Activated naive CD4-positive, alpha-beta T cell treated with anti-CD3 and anti-CD28 coated beads for 36 hours (primary cell): ENCODE measurements at regions of chr17 and their contacts with region 1.

Region 1: GRCh38 chr17:75515496-75516254 is at the start of gene CASKIN2:
- DNase-seq: peak; percentile 90
- H3K4me3 Mint-ChIP-seq: peak within 1 kb of the TSS; percentile 62
- H3K27ac Mint-ChIP-seq: no peak within 1 kb of the TSS
- H3K4me1 Mint-ChIP-seq: peaks cover 23% of the 10 kb centered on the region
- H3K27me3 Mint-ChIP-seq: no peaks in the 10 kb centered on the region
- total RNA-seq, gene CASKIN2: 1.0 to 1.1 TPM

Region 2: GRCh38 chr17:75261336-75262111 is 254.2 kb before region 1 on chr17 and contains the starts of genes GGA3 and MRPS7:
- CTCF ChIA-PET with region 1: interaction called, 3 read pairs
- intact Hi-C with region 1: loop called (anchors 10 kb)
- DNase-seq: peak; percentile 98
- H3K4me3 Mint-ChIP-seq: peak within 1 kb of the TSS; percentile 93
- H3K27ac Mint-ChIP-seq: peak within 1 kb of the TSS; percentile 99
- H3K4me1 Mint-ChIP-seq: peaks cover 53% of the 10 kb centered on the region
- H3K27me3 Mint-ChIP-seq: no peaks in the 10 kb centered on the region
- total RNA-seq, gene GGA3: 65.7 to 66.1 TPM
- total RNA-seq, gene MRPS7: 73.3 to 78.3 TPM

Region 3: GRCh38 chr17:75430159-75430974 is 85.3 kb before region 1 on chr17:
- CTCF ChIA-PET with region 1: interaction called, 4 read pairs
- intact Hi-C with region 1: loop called (anchors 1 kb)
- DNase-seq: no peak
- H3K4me3 Mint-ChIP-seq: no peak overlapping the region
- H3K27ac Mint-ChIP-seq: no peak overlapping the region
- H3K4me1 Mint-ChIP-seq: peaks cover 8% of the 10 kb centered on the region
- H3K27me3 Mint-ChIP-seq: peaks cover 2% of the 10 kb centered on the region

Region 4: DNA sequence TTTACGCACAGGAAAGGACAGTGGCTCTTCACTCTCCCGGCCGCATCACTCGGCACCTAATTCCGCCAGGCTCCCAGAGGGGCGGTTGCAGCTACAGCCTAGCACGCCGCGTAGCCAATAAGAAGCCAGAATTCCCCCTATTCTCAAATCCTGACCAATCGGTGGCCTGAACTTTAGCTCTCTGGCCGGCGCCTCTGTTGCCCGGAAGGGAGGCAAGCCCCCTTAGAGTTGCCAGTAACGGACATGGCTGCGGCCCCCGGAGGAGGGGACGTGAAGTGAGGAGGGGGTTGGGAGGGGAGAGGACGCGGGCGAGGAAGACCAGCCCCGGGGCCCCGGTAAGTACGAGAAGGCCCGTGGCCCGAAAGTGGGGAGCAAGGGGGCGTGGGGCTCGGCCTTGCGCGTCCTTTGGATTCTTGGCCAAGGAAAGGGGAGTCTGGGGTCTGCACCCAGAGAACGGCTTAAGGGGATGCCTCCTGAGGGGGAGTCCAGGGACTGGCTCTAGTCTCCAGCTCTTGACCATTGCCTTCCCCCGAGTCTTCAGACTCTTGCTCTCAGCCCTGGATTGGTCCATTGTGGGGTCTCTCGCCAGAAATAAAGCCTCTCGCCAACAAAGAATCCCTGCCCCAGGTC is 59.1 kb before region 1 on chr17 and contains the start of gene TMEM94:
- CTCF ChIA-PET with region 1: interaction called, 3 read pairs
- intact Hi-C with region 1: loop called (anchors 1 kb)
- DNase-seq: peak; percentile 96
- H3K4me3 Mint-ChIP-seq: peak within 1 kb of the TSS; percentile 83
- H3K27ac Mint-ChIP-seq: peak within 1 kb of the TSS; percentile 85
- H3K4me1 Mint-ChIP-seq: peaks cover 15% of the 10 kb centered on the region
- H3K27me3 Mint-ChIP-seq: no peaks in the 10 kb centered on the region
- total RNA-seq, gene TMEM94: 50.4 to 53.5 TPM

Region 5: GRCh38 chr17:75667021-75667790 is 151.5 kb after region 1 on chr17 and contains the starts of genes RECQL5 and SAP30BP:
- CTCF ChIA-PET with region 1: interaction called, 3 read pairs
- intact Hi-C with region 1: loop called (anchors 2 kb)
- DNase-seq: peak; percentile 99
- H3K4me3 Mint-ChIP-seq: peak within 1 kb of the TSS; percentile 64
- H3K27ac Mint-ChIP-seq: no peak within 1 kb of the TSS
- H3K4me1 Mint-ChIP-seq: peaks cover 35% of the 10 kb centered on the region
- H3K27me3 Mint-ChIP-seq: no peaks in the 10 kb centered on the region
- total RNA-seq, gene RECQL5: 36.2 to 44.0 TPM
- total RNA-seq, gene SAP30BP: 68.3 TPM